ENCODE measurements at regions of chr16 and their contacts with region 1.

Region 1: GRCh38 chr16:50665128-50665878 is 15.8 kb downstream of the SNX20 start:
- DNase-seq: peak; percentile 89
- ATAC-seq: peak; percentile 81
- H3K4me3 Mint-ChIP-seq: peak overlapping the region; percentile 70
- H3K27ac Mint-ChIP-seq: peak overlapping the region; percentile 50; the same call in 1 of the 2 replicates
- H3K4me1 Mint-ChIP-seq: peaks cover 16% of the 10 kb centered on the region
- H3K27me3 Mint-ChIP-seq: peaks cover 5% of the 10 kb centered on the region
- CTCF ChIP-seq: peak; percentile 86

Region 2: DNA sequence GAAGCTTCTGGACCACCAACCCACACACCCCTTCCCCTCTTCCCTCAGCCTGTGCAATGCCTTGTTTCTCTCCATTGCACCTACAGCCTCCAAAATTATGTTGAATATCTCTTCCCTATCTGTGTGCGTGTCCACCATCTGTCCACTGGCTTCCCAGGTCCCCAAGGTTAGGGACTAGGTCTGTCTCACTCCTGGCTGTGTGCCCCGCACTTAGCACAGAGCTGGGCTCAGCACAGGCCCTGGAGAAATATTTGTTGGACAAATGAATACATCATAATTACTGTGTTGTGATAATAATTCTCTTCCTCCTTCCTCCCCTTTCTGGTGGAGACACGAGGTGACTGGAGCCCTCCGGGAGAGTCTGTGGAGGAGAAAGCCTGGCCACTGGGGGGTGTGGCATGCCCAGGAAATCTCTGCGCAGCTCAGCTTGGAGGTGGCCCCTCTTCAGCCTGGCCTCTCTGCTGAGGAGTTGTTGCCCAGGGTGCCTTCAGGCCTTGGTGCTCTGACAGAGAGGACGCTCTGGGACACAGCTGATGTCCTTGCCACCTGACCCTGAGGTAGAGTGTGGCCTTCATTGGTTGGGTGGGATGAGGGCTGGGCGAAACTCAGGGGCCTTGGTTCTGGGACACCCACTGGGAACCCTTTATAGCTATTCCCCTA is 293.2 kb before region 1 on chr16:
- CTCF ChIA-PET with region 1: interaction called, 26 read pairs
- POLR2A ChIA-PET with region 1: no interaction called
- DNase-seq: peak; percentile 57
- ATAC-seq: peak; percentile 53
- H3K4me3 Mint-ChIP-seq: no peak overlapping the region; the same call in 1 of the 2 replicates
- H3K27ac Mint-ChIP-seq: no peak overlapping the region; the same call in 1 of the 2 replicates
- H3K4me1 Mint-ChIP-seq: peaks cover 20% of the 10 kb centered on the region
- H3K27me3 Mint-ChIP-seq: no peaks in the 10 kb centered on the region
- CTCF ChIP-seq: no peak

Region 3: DNA sequence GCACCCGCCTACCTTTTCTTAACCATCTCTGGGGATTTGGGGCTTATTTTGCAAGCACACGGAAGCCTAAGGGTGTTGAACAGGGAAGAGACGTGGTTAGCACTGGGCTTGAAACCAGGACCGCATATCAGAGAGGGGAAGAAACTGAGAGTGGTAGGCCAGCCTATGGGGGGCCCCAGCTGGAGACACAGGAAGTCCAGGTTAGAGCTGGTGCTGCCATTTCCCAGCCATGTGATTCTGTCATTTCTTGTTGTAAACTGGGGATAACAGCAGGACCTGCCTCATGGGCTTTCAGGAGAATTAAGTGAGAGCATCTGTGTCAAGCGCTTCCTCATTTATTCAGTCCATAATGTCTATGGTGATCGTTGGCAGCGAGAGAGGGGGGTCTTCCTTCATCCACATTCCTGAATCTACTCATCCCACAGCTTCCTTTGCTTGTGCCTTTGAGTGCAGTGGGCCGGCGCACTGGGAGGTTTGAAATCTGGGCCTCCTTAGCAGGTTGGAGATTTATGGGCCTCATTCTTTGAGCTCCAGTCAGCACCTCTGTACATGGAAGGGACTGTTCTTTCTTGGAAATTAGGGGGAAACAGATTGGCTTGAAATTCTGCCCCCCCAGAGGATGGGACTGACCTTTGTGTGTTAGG is 97.0 kb before region 1 on chr16:
- CTCF ChIA-PET with region 1: interaction called, 10 read pairs
- POLR2A ChIA-PET with region 1: no interaction called
- DNase-seq: no peak
- ATAC-seq: no peak; the same call in 1 of the 2 replicates
- H3K4me3 Mint-ChIP-seq: no peak overlapping the region
- H3K27ac Mint-ChIP-seq: no peak overlapping the region
- H3K4me1 Mint-ChIP-seq: peaks cover 23% of the 10 kb centered on the region
- H3K27me3 Mint-ChIP-seq: no peaks in the 10 kb centered on the region
- CTCF ChIP-seq: no peak

Region 4: DNA sequence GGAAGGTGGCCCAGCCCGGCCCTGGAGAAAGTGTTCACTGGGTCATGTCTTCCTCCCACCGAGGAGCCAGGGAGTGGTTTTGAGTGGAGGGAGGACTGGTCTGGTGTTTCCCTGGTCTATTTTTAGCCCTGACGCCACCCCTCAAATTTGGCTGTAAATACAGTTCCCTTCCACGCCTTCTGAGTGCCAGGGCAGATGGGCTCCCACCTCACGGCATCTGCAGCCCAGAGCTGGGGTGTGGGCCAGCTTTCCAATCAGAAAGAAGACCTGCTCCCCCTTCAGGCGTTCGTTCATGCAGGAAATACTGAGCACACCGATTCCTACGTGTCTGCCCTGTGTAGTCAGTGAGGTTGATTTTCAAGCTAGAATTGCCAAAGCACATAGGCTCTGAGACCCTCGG is 37.9 kb before region 1 on chr16:
- CTCF ChIA-PET with region 1: interaction called, 16 read pairs
- POLR2A ChIA-PET with region 1: no interaction called
- DNase-seq: peak; percentile 42
- ATAC-seq: peak; percentile 89
- H3K4me3 Mint-ChIP-seq: no peak overlapping the region
- H3K27ac Mint-ChIP-seq: no peak overlapping the region
- H3K4me1 Mint-ChIP-seq: peaks cover 3% of the 10 kb centered on the region; the same call in 1 of the 2 replicates
- H3K27me3 Mint-ChIP-seq: no peaks in the 10 kb centered on the region
- CTCF ChIP-seq: no peak

Region 5: DNA sequence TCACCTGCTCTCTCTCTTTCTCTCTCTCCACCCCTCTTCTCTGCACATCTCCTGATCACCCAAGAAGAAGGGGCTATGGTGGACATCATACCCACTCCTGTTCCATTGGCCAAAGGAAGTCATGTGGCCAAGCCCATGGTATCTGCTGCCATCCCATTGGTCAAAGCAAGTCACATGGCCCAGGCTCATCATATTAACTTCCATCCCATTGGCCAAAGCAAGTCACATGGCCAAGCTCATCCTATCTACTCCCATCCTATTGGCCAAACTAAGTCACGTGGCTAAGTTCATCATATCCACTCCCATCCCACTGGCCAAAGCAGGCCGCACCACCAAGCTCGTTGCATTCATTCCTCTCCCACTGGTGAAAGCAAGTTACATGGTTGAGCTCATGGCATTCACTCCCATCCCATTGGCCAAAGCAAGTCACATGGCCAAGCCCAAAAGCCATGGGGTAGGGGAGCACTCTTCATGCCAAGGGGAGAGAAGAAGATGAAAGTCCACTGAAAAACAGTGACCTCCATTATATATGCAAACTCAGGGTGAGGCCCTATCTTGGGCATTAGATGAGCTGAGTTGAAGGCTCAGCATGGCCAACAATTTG is 13.4 kb before region 1 on chr16:
- CTCF ChIA-PET with region 1: interaction called, 14 read pairs
- POLR2A ChIA-PET with region 1: no interaction called
- DNase-seq: no peak
- ATAC-seq: no peak
- H3K4me3 Mint-ChIP-seq: no peak overlapping the region
- H3K27ac Mint-ChIP-seq: no peak overlapping the region
- H3K4me1 Mint-ChIP-seq: no peaks in the 10 kb centered on the region
- H3K27me3 Mint-ChIP-seq: no peaks in the 10 kb centered on the region; the same call in 1 of the 2 replicates
- CTCF ChIP-seq: no peak

Region 6: GRCh38 chr16:50741808-50742575 is 76.7 kb after region 1 on chr16 and contains the start of gene CYLD:
- CTCF ChIA-PET with region 1: interaction called, 44 read pairs
- POLR2A ChIA-PET with region 1: no interaction called
- DNase-seq: peak; percentile 99
- ATAC-seq: peak; percentile 98
- H3K4me3 Mint-ChIP-seq: peak within 1 kb of the TSS; percentile 73
- H3K27ac Mint-ChIP-seq: peak within 1 kb of the TSS; percentile 87; the same call in 1 of the 2 replicates
- H3K4me1 Mint-ChIP-seq: peaks cover 34% of the 10 kb centered on the region
- H3K27me3 Mint-ChIP-seq: no peaks in the 10 kb centered on the region; the same call in none of the 2 replicates
- CTCF ChIP-seq: no peak
- total RNA-seq, gene CYLD: 9.4 to 10.8 TPM (median 9.6 TPM) in 3 replicates

Region 7: GRCh38 chr16:50868577-50868976 is 203.3 kb after region 1 on chr16:
- CTCF ChIA-PET with region 1: no interaction called
- POLR2A ChIA-PET with region 1: no interaction called
- DNase-seq: no peak
- ATAC-seq: no peak
- H3K4me3 Mint-ChIP-seq: no peak overlapping the region
- H3K27ac Mint-ChIP-seq: no peak overlapping the region
- H3K4me1 Mint-ChIP-seq: no peaks in the 10 kb centered on the region
- H3K27me3 Mint-ChIP-seq: no peaks in the 10 kb centered on the region
- CTCF ChIP-seq: no peak

Measured in WTC11 (cell line).